K562 (cell line): ENCODE measurements at regions of chr9 and their contacts with region 1.

Region 1: DNA sequence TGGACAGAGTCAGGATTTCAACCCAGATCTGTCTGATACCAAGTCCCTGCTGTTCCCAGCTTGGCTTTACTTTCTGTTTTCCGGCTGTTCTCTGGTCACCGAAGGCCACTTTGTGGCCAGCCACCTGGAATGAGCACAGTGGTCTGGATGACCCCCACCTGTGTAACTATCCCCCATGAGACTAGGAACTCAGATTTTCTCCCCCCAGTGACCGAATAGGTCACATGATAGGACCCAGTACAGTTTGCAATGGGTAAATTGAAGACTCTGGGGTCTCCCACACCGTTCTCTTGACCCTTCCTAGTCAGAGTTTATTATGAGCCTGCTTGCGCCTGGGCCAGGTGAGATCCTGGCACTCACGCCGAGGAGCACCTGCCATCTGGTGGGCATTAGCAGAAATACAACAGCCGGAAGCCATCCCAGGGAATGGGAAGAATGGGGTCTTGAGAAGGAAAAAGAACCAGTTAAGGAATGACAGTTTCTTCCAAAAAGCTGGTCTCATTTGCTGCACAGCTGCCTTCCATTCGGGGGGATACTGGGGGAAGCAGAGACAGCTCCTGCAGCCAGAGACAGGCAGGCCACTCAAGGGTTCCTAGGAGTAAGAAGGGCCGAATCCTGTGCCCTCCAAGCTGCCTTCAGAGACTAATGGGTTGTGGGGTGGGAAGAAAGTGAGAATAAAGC is 7.1 kb downstream of the PHYHD1 start:
- DNase-seq: peak; percentile 72 to 75 (median 75)
- ATAC-seq: peak; percentile 86
- H3K4me3 ChIP-seq: no peak overlapping the region
- H3K27ac ChIP-seq: no peak overlapping the region
- H3K4me1 ChIP-seq: peaks cover 4 to 13% of the 10 kb centered on the region in 2 experiments; a peak in 4 of 5 replicates
- H3K27me3 ChIP-seq: no peaks in the 10 kb centered on the region; a peak in 1 of 5 replicates
- CTCF ChIP-seq: peak; percentile 91 to 93 (median 92)
- EP300 ChIP-seq: no peak
- POLR2A ChIP-seq: no peak
- RAD21 ChIP-seq: peak; percentile 89 to 95

Region 2: GRCh38 chr9:128863647-128864046 is 64.2 kb before region 1 on chr9:
- CTCF ChIA-PET with region 1: interaction called, 15 read pairs
- POLR2A ChIA-PET with region 1: no interaction called
- in situ Hi-C with region 1: loop called (anchors 5 kb)
- intact Hi-C with region 1: loop called (anchors 1 kb)
- DNase-seq: peak; percentile 83 to 93 (median 89)
- ATAC-seq: peak; percentile 99
- H3K4me3 ChIP-seq: no peak overlapping the region
- H3K27ac ChIP-seq: peak overlapping the region; percentile 10; the same call in 1 of the 3 replicates
- H3K4me1 ChIP-seq: peaks cover 10 to 11% of the 10 kb centered on the region in 2 experiments; a peak in 4 of 5 replicates
- H3K27me3 ChIP-seq: no peaks in the 10 kb centered on the region
- CTCF ChIP-seq: peak; percentile 93 to 99 (median 97)
- EP300 ChIP-seq: no peak
- POLR2A ChIP-seq: no peak
- RAD21 ChIP-seq: peak; percentile 80 to 89

Region 3: GRCh38 chr9:129093421-129094204 is 165.7 kb after region 1 on chr9:
- CTCF ChIA-PET with region 1: no interaction called
- POLR2A ChIA-PET with region 1: no interaction called
- in situ Hi-C with region 1: no loop called
- intact Hi-C with region 1: no loop called
- DNase-seq: no peak
- ATAC-seq: no peak; the same call in 2 of the 3 replicates
- H3K4me3 ChIP-seq: no peak overlapping the region
- H3K27ac ChIP-seq: no peak overlapping the region
- H3K4me1 ChIP-seq: peaks cover 0 to 32% of the 10 kb centered on the region in 2 experiments; a peak in 2 of 5 replicates
- H3K27me3 ChIP-seq: no peaks in the 10 kb centered on the region
- CTCF ChIP-seq: no peak
- EP300 ChIP-seq: no peak
- POLR2A ChIP-seq: no peak
- RAD21 ChIP-seq: no peak